ENCODE measurements at regions of chr15 and their contacts with region 1.

Region 1: GRCh38 chr15:45118131-45118588 is 4.0 kb downstream of the DUOXA2 start:
- DNase-seq: peak; percentile 89
- H3K4me3 Mint-ChIP-seq: no peak overlapping the region
- H3K27ac Mint-ChIP-seq: no peak overlapping the region
- H3K4me1 Mint-ChIP-seq: peaks cover 12% of the 10 kb centered on the region
- H3K27me3 Mint-ChIP-seq: peaks cover 27% of the 10 kb centered on the region
- CTCF ChIP-seq: peak; percentile 96

Region 2: GRCh38 chr15:44215594-44215993 is 902.6 kb before region 1 on chr15:
- CTCF ChIA-PET with region 1: no interaction called
- POLR2A ChIA-PET with region 1: no interaction called
- intact Hi-C with region 1: no loop called
- DNase-seq: peak; percentile 72
- H3K4me3 Mint-ChIP-seq: no peak overlapping the region
- H3K27ac Mint-ChIP-seq: no peak overlapping the region
- H3K4me1 Mint-ChIP-seq: peaks cover 11% of the 10 kb centered on the region
- H3K27me3 Mint-ChIP-seq: no peaks in the 10 kb centered on the region
- CTCF ChIP-seq: no peak

Region 3: GRCh38 chr15:44676676-44677075 is 441.5 kb before region 1 on chr15:
- CTCF ChIA-PET with region 1: no interaction called
- POLR2A ChIA-PET with region 1: no interaction called
- intact Hi-C with region 1: no loop called
- DNase-seq: no peak
- H3K4me3 Mint-ChIP-seq: no peak overlapping the region
- H3K27ac Mint-ChIP-seq: no peak overlapping the region
- H3K4me1 Mint-ChIP-seq: no peaks in the 10 kb centered on the region
- H3K27me3 Mint-ChIP-seq: peaks cover 10% of the 10 kb centered on the region
- CTCF ChIP-seq: no peak

Region 4: GRCh38 chr15:44968475-44968874 is 149.7 kb before region 1 on chr15:
- CTCF ChIA-PET with region 1: interaction called, 5 read pairs
- POLR2A ChIA-PET with region 1: interaction called, 3 read pairs
- intact Hi-C with region 1: loop called (anchors 5 kb)
- DNase-seq: no peak
- H3K4me3 Mint-ChIP-seq: no peak overlapping the region
- H3K27ac Mint-ChIP-seq: no peak overlapping the region
- H3K4me1 Mint-ChIP-seq: no peaks in the 10 kb centered on the region
- H3K27me3 Mint-ChIP-seq: no peaks in the 10 kb centered on the region
- CTCF ChIP-seq: no peak

Region 5: DNA sequence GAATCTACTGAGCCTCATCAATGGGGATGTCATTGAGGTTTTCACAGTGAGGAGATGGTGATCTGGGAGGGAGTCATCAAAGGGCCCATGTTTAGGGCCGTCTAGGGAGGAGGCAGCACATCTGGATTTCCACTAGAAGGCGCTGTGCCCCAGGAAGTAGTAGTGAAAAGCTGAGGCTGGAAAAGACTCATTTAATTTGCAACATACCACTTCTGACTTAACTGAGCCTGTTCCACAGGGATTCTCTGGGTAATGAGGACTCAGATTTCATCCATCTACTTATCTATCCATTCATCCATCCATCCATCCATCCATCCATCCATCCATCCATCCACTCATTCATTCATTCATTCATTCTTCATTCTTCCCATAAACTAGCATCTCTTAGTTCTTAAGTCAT is 87.0 kb after region 1 on chr15:
- CTCF ChIA-PET with region 1: interaction called, 13 read pairs
- POLR2A ChIA-PET with region 1: no interaction called
- intact Hi-C with region 1: no loop called
- DNase-seq: peak; percentile 80
- H3K4me3 Mint-ChIP-seq: no peak overlapping the region
- H3K27ac Mint-ChIP-seq: no peak overlapping the region
- H3K4me1 Mint-ChIP-seq: peaks cover 6% of the 10 kb centered on the region
- H3K27me3 Mint-ChIP-seq: no peaks in the 10 kb centered on the region
- CTCF ChIP-seq: peak; percentile 75

Region 6: DNA sequence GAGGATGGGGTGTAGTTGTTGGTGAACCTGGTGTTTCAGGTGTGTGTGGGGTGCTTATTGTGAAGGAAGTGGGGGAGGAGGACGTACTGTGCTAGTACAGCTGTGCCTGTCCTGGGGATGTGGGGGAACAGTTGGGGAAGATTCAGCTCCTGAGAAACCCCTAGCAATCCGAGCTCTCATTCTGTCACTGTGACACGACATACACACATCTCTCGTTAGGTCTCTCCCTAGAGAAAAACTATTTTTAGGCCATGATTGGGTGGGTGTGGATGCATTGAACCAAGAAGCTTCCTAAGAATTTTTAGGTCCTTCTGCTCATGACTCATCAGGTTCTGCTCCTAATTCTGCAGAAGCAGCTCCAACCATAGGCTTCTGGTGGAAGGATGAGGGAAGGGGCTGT is 350.1 kb after region 1 on chr15:
- CTCF ChIA-PET with region 1: no interaction called
- POLR2A ChIA-PET with region 1: no interaction called
- intact Hi-C with region 1: no loop called
- DNase-seq: no peak
- H3K4me3 Mint-ChIP-seq: no peak overlapping the region
- H3K27ac Mint-ChIP-seq: no peak overlapping the region
- H3K4me1 Mint-ChIP-seq: no peaks in the 10 kb centered on the region
- H3K27me3 Mint-ChIP-seq: no peaks in the 10 kb centered on the region
- CTCF ChIP-seq: no peak

Region 7: DNA sequence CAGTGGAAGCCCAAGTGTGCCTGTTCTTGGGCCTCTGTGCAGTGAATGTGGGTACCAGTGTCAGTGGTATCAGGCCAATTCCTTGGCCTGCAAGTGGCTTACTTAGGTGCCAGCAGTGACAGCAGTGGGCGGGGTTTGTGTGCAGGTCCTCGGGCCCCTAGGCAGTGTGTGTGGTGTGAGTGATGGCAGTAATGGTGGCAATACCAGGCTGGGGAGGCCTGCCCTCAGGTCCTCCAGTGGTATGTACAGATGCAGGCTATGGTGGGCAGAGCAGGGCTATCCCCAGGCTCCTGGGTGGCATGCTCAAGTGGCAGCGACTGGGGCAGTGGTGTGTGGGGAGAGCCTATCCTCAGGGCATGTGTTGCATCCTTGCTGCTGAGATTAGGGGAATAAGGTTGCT is 896.4 kb after region 1 on chr15:
- CTCF ChIA-PET with region 1: no interaction called
- POLR2A ChIA-PET with region 1: no interaction called
- intact Hi-C with region 1: no loop called
- DNase-seq: no peak
- H3K4me3 Mint-ChIP-seq: no peak overlapping the region
- H3K27ac Mint-ChIP-seq: no peak overlapping the region
- H3K4me1 Mint-ChIP-seq: no peaks in the 10 kb centered on the region
- H3K27me3 Mint-ChIP-seq: no peaks in the 10 kb centered on the region
- CTCF ChIP-seq: no peak